Transverse colon (tissue), 4 donors: ENCODE measurements at regions of chr21 and their contacts with region 1.

Region 1: DNA sequence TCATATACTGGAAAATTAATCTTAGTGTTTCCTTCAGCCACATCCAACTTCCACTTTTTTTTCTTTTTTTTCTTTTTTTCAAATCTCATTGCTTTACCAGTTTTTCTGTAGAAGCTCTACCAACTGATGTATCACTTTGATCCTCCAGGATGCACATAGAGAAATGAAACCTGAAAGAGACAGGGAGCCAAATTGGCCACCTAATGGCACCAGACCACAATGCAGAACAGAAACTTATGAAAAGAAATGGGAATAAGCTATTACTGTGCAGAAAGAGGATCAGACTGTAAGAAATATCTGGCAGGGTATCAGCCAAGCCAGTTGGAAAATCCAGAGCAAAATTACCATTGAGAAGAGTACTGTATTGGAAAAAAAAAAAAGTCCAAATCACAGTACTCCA is 1514.2 kb downstream of the MRPL39 start:
- DNase-seq: no peak
- H3K4me3 ChIP-seq: no peak overlapping the region
- H3K27ac ChIP-seq: no peak overlapping the region
- H3K4me1 ChIP-seq: no peaks in the 10 kb centered on the region
- H3K27me3 ChIP-seq: no peaks in the 10 kb centered on the region
- CTCF ChIP-seq: no peak
- EP300 ChIP-seq: no peak
- POLR2A ChIP-seq: no peak

Region 2: DNA sequence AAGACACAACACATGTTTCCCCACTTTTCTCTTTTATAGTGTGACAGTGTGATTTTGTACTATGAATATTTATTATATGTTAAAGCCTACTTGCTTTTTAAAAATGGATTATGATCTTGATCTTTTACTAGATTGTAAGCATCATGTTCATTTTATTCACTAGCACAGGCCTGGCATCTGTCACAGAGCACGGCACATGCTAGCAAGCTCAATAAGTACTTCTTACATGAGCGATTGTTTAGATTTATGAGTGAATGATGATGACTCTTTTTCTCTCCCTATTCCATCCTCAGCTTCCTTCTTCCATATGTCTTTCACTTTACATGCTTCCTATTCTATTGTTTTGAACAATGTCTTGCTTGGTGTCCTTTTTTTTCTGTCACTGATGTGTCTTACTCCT is 60.1 kb after region 1 on chr21:
- in situ Hi-C with region 1: loop called in 1 of 4 experiments (anchors 10 kb)
- intact Hi-C with region 1: no loop called
- DNase-seq: no peak
- H3K4me3 ChIP-seq: no peak overlapping the region
- H3K27ac ChIP-seq: no peak overlapping the region
- H3K4me1 ChIP-seq: no peaks in the 10 kb centered on the region
- H3K27me3 ChIP-seq: no peaks in the 10 kb centered on the region
- CTCF ChIP-seq: no peak
- EP300 ChIP-seq: no peak
- POLR2A ChIP-seq: no peak

Region 3: DNA sequence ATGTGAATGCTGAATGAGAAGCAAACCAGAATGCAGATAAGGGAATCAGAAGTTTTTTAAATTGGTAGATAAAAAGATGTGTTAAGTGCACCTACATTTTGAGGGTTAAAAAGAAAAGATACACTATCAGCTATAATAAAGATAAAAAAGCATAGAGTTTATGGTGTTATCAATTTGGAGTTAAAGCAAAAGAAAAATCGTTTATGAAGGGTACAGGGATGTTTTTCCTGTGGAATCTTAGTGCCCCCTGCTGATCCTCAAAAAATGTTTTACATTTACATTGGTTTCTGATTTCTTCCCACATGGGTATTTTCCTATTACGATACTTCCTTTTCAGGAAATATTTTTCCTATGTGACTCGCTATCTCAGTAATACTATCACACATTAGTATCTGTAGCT is 1220.8 kb after region 1 on chr21:
- in situ Hi-C with region 1: no loop called
- intact Hi-C with region 1: no loop called
- DNase-seq: no peak
- H3K4me3 ChIP-seq: no peak overlapping the region
- H3K27ac ChIP-seq: no peak overlapping the region
- H3K4me1 ChIP-seq: no peaks in the 10 kb centered on the region
- H3K27me3 ChIP-seq: no peaks in the 10 kb centered on the region
- CTCF ChIP-seq: no peak
- EP300 ChIP-seq: no peak
- POLR2A ChIP-seq: no peak